ENCODE measurements at regions of chr6 and their contacts with region 1.

Region 1: DNA sequence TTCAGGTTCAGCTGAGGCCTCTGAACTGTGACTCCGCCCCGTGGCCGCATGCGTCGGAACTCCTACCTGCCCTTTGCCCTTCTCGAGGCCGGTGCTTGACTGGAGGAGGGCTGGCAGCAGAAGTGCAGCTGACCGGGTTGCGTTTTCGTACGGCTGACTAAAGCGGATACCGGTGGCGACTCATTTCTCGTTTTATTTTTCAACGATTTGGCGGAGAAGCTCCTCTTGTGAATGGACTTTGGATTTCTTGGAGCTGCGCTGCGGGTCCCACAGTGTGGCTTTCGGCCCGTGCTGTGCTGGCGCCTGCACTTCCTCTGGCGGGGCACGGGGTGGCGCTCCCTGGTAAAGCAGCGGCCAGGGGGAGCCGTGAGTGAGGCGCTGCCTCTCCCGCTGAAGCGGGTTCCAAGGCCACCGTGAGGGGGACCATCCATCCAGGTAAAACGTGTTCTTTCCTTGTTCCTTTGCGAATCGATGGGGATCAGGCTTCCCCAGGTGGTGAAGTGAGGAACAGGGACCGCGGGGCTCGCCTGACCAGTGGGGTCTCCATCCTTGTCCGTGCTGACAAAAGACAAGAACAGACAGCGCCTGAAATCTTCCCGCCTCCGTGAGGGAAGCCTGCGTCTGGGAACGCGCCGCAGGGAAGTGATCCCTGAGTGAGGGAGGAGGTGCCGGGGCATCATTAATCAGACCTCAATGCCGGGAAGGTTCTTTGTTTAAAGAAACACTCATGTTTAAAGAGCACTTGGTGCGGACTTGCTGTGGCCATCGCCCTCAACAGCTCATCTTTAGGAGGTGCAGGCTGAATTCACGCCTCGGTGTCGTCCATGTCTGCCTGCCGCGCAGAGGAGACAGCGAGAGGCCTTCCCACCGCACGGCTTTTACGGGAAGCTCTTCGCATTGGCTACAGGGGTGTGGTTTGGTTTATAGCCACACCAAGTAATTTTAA is 38.8 kb downstream of the ERMARD start:
- DNase-seq: peak; percentile 82
- ATAC-seq: peak; percentile 96
- H3K4me3 Mint-ChIP-seq: peak overlapping the region; percentile 65
- H3K27ac Mint-ChIP-seq: no peak overlapping the region
- H3K4me1 Mint-ChIP-seq: peaks cover 16% of the 10 kb centered on the region; the same call in 1 of the 2 replicates
- H3K27me3 Mint-ChIP-seq: peaks cover 31% of the 10 kb centered on the region
- CTCF ChIP-seq: peak; percentile 88

Region 2: GRCh38 chr6:169751242-169752073 is 38.8 kb before region 1 on chr6 and contains the starts of genes DYNLT2 and ERMARD:
- CTCF ChIA-PET with region 1: interaction called, 11 read pairs
- POLR2A ChIA-PET with region 1: no interaction called
- DNase-seq: peak; percentile 95
- ATAC-seq: peak; percentile 91
- H3K4me3 Mint-ChIP-seq: peak within 1 kb of the TSS; percentile 99
- H3K27ac Mint-ChIP-seq: peak within 1 kb of the TSS; percentile 99
- H3K4me1 Mint-ChIP-seq: peaks cover 22% of the 10 kb centered on the region
- H3K27me3 Mint-ChIP-seq: no peaks in the 10 kb centered on the region
- CTCF ChIP-seq: no peak
- total RNA-seq, gene DYNLT2: 1.3 to 1.7 TPM (median 1.5 TPM) in 3 replicates
- total RNA-seq, gene ERMARD: 15.8 to 17.7 TPM (median 17.2 TPM) in 3 replicates

Region 3: DNA sequence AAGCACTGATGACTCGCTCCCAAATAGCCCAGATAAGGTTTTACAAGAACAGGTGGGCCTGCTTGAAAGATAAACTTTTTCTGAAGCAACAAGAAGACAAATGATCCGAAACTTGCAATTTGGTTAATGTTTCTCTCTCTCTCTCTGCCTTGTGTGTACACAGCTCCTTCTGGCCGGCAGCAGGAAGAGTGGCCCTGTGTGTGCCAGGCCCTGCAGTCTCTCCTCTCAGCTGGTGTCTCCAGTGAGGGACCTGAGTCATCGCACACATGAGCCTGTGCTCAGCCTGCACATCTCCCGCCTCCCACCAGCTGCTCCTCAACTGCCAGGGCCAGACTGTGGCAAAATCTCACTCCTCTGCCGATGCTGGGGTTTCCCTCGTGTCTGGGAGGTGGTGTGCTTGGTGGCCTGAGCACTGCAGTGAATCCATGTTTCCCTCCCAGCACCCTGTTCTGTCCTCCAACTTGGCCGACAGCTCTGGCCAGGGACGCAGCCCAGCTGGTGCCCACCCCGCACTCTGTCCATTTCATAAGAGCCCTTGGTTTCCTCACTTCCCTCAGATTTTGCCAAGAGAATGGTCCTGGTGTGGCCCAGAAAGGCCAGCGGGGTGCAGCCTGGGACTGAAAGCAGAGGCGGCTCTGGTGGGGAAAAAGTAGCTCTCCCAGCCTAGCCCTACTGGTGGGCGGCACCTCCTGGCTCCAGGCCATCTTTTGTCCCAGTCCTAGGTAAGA is 10.6 kb after region 1 on chr6:
- CTCF ChIA-PET with region 1: interaction called, 28 read pairs
- POLR2A ChIA-PET with region 1: no interaction called
- DNase-seq: no peak
- ATAC-seq: peak; percentile 51
- H3K4me3 Mint-ChIP-seq: no peak overlapping the region
- H3K27ac Mint-ChIP-seq: no peak overlapping the region
- H3K4me1 Mint-ChIP-seq: peaks cover 10% of the 10 kb centered on the region
- H3K27me3 Mint-ChIP-seq: peaks cover 23% of the 10 kb centered on the region
- CTCF ChIP-seq: no peak

Region 4: GRCh38 chr6:169933839-169934698 is 143.8 kb after region 1 on chr6:
- CTCF ChIA-PET with region 1: interaction called, 15 read pairs
- POLR2A ChIA-PET with region 1: no interaction called
- DNase-seq: no peak
- ATAC-seq: no peak
- H3K4me3 Mint-ChIP-seq: no peak overlapping the region
- H3K27ac Mint-ChIP-seq: no peak overlapping the region
- H3K4me1 Mint-ChIP-seq: peaks cover 40% of the 10 kb centered on the region
- H3K27me3 Mint-ChIP-seq: peaks cover 53% of the 10 kb centered on the region
- CTCF ChIP-seq: no peak

Region 5: GRCh38 chr6:169961772-169962561 is 171.7 kb after region 1 on chr6:
- CTCF ChIA-PET with region 1: interaction called, 11 read pairs
- POLR2A ChIA-PET with region 1: no interaction called
- DNase-seq: peak; percentile 70
- ATAC-seq: peak; percentile 78
- H3K4me3 Mint-ChIP-seq: peak overlapping the region; percentile 51
- H3K27ac Mint-ChIP-seq: no peak overlapping the region
- H3K4me1 Mint-ChIP-seq: peaks cover 6% of the 10 kb centered on the region; the same call in 1 of the 2 replicates
- H3K27me3 Mint-ChIP-seq: peaks cover 7% of the 10 kb centered on the region
- CTCF ChIP-seq: no peak

Measured in WTC11 (cell line).